ENCODE measurements at regions of chr3 and their contacts with region 1.

Region 1: GRCh38 chr3:197256836-197257444 is 41.5 kb downstream of the DLG1 start:
- DNase-seq: peak; percentile 39
- H3K4me3 ChIP-seq: no peak overlapping the region
- H3K27ac ChIP-seq: no peak overlapping the region
- H3K4me1 ChIP-seq: no peaks in the 10 kb centered on the region
- H3K27me3 ChIP-seq: no peaks in the 10 kb centered on the region
- CTCF ChIP-seq: peak; percentile 47 to 80 (median 70)
- POLR2A ChIP-seq: no peak

Region 2: DNA sequence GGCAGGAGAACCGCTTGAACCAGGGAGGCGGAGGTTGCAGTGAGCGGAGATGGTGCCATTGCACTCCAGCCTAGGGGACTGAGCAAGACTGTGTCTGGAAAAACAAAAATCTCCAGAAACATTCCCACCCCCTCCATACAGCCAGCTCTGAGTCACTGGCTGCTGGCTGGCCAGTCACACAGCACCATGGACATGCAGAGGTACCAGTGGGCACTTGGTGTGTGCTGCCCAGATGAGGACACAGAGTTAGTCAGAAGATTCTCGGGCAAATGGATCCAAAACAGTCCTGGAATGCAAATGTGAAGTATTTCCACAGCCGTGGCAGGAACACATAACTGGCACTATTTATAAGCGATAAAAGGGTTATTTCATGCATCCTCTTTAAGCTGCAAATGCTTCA is 254.2 kb after region 1 on chr3:
- intact Hi-C with region 1: loop called (anchors 2 kb)
- DNase-seq: no peak
- H3K4me3 ChIP-seq: no peak overlapping the region
- H3K27ac ChIP-seq: no peak overlapping the region
- H3K4me1 ChIP-seq: no peaks in the 10 kb centered on the region
- H3K27me3 ChIP-seq: no peaks in the 10 kb centered on the region
- CTCF ChIP-seq: no peak
- POLR2A ChIP-seq: no peak